ENCODE measurements at regions of chr5 and their contacts with region 1.

Region 1: GRCh38 chr5:172932313-172933017 is 26.8 kb upstream of the RPL26L1 start:
- DNase-seq: peak; percentile 64 to 74 (median 70)
- H3K4me3 ChIP-seq: no peak overlapping the region
- H3K4me3 Mint-ChIP-seq: no peak overlapping the region
- H3K27ac ChIP-seq: no peak overlapping the region
- H3K27ac Mint-ChIP-seq: peak overlapping the region in 5 of 7 donors; percentile 54 to 80 (median 66)
- H3K4me1 ChIP-seq: peaks cover 4% of the 10 kb centered on the region
- H3K4me1 Mint-ChIP-seq: peaks cover 6 to 8% (median 6%) of the 10 kb centered on the region in 4 donors
- H3K27me3 ChIP-seq: no peaks in the 10 kb centered on the region
- H3K27me3 Mint-ChIP-seq: no peaks in the 10 kb centered on the region

Region 2: DNA sequence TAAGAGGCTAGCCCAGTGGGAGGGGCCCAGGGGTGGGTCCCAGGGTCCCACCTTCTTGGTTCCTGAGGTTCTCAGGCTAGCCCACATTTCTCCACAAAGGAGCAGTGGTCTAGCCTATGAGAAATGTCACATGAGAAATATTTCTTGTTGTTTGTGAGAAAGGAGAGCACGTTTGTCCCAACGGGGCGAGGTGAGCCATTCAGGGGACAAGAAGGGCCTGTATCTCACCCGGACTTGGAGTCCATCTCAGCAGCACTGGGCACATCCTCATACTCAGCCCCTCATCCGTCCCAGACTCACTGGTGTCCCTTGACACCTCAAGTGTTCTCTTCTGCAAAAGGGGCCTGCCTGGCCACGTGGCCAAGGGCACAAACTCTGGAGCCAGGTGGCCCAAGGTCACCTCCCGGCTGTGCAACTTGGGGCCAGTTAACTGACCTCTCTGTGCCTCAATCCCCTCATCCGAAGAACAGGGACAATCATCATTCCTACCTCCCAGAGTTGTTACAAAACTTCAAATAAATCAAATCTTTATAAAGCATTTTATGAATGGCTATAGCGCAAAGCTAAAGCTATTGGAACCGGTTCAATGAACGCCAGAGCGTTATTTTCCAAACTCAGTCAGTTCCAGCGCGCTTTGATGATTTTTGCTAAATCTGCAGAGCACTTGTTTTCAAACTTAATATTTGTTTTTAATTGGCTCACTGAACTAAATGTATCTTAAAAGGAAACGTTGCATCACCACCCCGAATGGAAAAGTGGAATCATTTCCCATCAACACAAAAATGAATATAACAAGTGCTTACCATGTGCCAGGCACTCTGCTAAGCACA is 210.9 kb before region 1 on chr5:
- CTCF ChIA-PET with region 1: interaction called, 55 read pairs
- POLR2A ChIA-PET with region 1: interaction called, 15 read pairs
- intact Hi-C with region 1: no loop called
- DNase-seq: no peak
- H3K4me3 ChIP-seq: no peak overlapping the region
- H3K4me3 Mint-ChIP-seq: peak overlapping the region in 4 of 8 donors; percentile 35 to 69 (median 54)
- H3K27ac ChIP-seq: no peak overlapping the region
- H3K27ac Mint-ChIP-seq: peak overlapping the region in 5 of 7 donors; percentile 5 to 95 (median 62)
- H3K4me1 ChIP-seq: peaks cover 24% of the 10 kb centered on the region
- H3K4me1 Mint-ChIP-seq: peaks cover 15 to 34% (median 22%) of the 10 kb centered on the region in 4 donors
- H3K27me3 ChIP-seq: no peaks in the 10 kb centered on the region
- H3K27me3 Mint-ChIP-seq: no peaks in the 10 kb centered on the region

Region 3: DNA sequence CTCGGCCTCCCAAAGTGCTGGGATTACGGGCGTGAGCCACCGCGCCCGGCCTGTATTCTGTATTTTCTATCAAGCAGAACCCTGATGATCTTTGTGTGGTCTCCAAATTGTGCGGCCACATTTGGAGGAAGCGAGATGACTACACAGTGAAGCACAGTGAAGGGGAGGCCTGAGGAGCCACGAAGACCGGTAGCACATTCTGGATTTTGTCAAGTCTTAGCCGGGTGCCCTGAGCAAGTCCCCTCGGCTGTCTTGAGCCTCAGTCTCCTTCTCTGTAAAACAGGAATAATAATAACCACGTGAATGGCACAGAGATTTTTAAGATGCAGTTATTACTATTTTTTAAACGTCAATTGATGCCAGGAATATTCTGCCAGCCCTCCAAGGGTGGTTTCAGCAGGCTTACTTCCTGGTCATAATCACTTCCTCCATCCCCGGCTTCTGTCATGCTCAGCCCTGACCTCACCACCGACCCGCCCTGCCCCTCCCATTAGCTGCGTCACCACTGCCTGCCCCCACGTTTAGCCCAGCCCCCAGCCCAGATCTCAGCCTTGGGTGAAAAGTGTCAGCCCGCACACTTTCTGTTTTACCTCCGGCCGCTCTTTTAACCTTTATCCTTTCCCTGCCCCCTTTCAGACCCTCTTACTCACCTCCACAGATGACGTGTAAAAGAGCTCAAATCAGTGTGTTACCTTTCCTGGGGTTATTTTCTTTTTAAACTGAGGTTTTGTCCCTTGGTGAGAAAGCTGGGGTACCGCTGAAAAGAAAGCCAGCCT is 125.4 kb before region 1 on chr5:
- CTCF ChIA-PET with region 1: interaction called, 11 read pairs
- POLR2A ChIA-PET with region 1: no interaction called
- intact Hi-C with region 1: no loop called
- DNase-seq: peak; percentile 72 to 88 (median 78)
- H3K4me3 ChIP-seq: peak overlapping the region in 1 of 2 donors; percentile 21
- H3K4me3 Mint-ChIP-seq: peak overlapping the region; percentile 75 to 91 (median 82)
- H3K27ac ChIP-seq: peak overlapping the region; percentile 52
- H3K27ac Mint-ChIP-seq: peak overlapping the region; percentile 79 to 98 (median 95)
- H3K4me1 ChIP-seq: peaks cover 11% of the 10 kb centered on the region
- H3K4me1 Mint-ChIP-seq: peaks cover 9 to 16% (median 14%) of the 10 kb centered on the region in 4 donors
- H3K27me3 ChIP-seq: no peaks in the 10 kb centered on the region
- H3K27me3 Mint-ChIP-seq: peaks cover 0 to 1% of the 10 kb centered on the region in 2 donors

Region 4: GRCh38 chr5:172860520-172861443 is 71.7 kb before region 1 on chr5:
- CTCF ChIA-PET with region 1: interaction called, 13 read pairs
- POLR2A ChIA-PET with region 1: no interaction called
- intact Hi-C with region 1: no loop called
- DNase-seq: no peak
- H3K4me3 ChIP-seq: no peak overlapping the region
- H3K4me3 Mint-ChIP-seq: no peak overlapping the region
- H3K27ac ChIP-seq: no peak overlapping the region
- H3K27ac Mint-ChIP-seq: peak overlapping the region in 3 of 7 donors; percentile 71 to 74 (median 72)
- H3K4me1 ChIP-seq: peaks cover 19% of the 10 kb centered on the region
- H3K4me1 Mint-ChIP-seq: peaks cover 22 to 48% (median 36%) of the 10 kb centered on the region in 4 donors
- H3K27me3 ChIP-seq: no peaks in the 10 kb centered on the region
- H3K27me3 Mint-ChIP-seq: no peaks in the 10 kb centered on the region

Region 5: DNA sequence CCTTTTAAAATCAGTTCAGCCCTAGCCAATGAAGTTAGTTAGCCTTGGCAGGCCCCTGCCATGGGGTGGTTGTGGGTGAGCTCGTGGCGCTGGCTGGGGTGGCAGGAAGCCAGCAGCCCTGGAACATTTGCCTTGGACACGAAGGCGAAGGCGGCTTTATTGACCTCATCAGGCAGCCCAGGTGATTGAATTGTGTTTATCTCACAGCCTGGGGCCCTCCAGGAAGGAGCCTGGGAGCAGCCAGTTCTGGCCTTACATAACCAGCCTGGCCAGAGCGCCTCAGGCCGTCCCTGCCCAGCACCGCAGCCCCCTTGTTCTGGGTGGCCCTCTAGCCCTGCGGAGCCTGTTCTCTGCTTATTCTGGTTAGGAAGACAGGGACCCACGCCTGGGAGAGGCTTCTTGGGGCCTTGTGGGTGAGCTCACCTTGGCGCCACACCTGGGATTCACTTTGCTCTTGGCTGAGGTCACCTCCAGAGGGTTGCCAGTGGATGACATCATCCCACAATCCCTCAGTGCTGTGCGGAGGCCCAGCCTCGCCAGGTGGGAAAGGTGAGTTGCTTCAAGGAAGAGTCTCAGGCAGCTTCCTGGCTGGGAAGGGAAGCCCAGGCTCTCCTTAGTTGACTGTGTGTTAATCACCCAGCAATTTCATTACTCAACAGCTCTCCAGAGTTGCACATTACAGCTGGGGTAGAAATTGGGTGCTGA is 27.7 kb before region 1 on chr5:
- CTCF ChIA-PET with region 1: interaction called, 11 read pairs
- POLR2A ChIA-PET with region 1: no interaction called
- intact Hi-C with region 1: no loop called
- DNase-seq: no peak
- H3K4me3 ChIP-seq: no peak overlapping the region
- H3K4me3 Mint-ChIP-seq: no peak overlapping the region
- H3K27ac ChIP-seq: no peak overlapping the region
- H3K27ac Mint-ChIP-seq: peak overlapping the region in 1 of 7 donors; percentile 52
- H3K4me1 ChIP-seq: no peaks in the 10 kb centered on the region
- H3K4me1 Mint-ChIP-seq: peaks cover 0 to under 1% (median 0%) of the 10 kb centered on the region in 4 donors
- H3K27me3 ChIP-seq: no peaks in the 10 kb centered on the region
- H3K27me3 Mint-ChIP-seq: no peaks in the 10 kb centered on the region

Region 6: DNA sequence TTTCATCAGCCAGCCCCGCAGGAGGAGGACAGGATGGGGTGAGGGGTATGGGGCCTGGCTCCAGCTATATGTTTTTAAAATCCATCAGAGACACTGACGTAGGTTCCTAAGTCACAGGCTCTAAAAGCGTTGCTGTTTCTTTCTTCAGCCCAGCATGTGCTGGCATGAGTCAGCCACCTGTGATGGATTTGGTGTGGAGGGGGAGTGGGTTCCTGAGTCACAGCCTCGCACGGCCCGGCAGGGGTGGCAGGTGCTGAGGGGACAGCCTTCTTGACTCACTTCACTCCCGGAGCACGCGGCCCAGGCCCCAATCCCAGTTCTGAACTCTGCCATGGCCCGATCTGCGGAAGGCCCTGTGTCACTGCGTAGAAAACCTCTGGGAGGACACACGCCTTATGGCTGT is 12.0 kb before region 1 on chr5:
- CTCF ChIA-PET with region 1: interaction called, 10 read pairs
- POLR2A ChIA-PET with region 1: no interaction called
- intact Hi-C with region 1: no loop called
- DNase-seq: no peak
- H3K4me3 ChIP-seq: no peak overlapping the region
- H3K4me3 Mint-ChIP-seq: no peak overlapping the region
- H3K27ac ChIP-seq: no peak overlapping the region
- H3K27ac Mint-ChIP-seq: peak overlapping the region in 1 of 7 donors; percentile 30
- H3K4me1 ChIP-seq: no peaks in the 10 kb centered on the region
- H3K4me1 Mint-ChIP-seq: peaks cover 0 to 4% (median under 1%) of the 10 kb centered on the region in 4 donors
- H3K27me3 ChIP-seq: no peaks in the 10 kb centered on the region
- H3K27me3 Mint-ChIP-seq: no peaks in the 10 kb centered on the region

Region 7: DNA sequence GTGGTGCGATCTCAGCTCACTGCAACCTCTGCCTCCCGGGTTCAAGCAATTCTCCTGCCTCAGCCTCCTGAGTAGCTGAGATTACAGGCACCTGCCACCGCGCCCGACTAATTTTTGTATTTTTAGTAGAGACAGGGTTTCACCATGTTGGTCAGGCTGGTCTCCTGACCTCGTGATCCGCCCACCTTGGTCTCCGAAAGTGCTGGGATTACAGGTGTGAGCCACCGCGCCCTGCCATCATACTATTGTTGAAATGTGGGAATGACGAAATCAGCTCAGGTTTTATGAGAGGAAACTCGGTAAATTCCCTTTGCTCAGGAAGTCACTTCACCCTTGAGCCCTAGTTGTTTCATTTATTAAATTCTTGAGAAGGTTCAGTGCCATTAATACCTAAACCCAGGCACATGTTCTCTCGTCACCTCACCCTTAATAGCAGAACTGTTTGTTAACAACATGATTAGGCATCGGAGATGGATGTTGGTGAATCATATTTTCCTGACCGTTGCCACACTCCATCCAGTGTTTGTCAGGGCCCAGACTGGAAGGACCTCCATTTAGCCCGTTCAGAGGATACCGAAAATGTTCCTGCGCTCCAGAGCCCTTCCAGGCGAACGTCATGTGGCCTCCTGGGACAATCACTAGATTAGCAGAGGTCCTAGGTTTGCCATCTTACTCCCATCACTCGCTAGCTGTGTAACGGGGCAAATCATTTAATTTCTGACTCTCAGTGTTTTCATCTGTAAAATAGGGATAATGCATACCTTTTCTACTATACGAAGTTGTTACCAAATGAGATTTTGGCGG is 103.6 kb after region 1 on chr5:
- CTCF ChIA-PET with region 1: no interaction called
- POLR2A ChIA-PET with region 1: no interaction called
- intact Hi-C with region 1: no loop called
- DNase-seq: peak in 1 of 5 donors; percentile 40
- H3K4me3 ChIP-seq: peak overlapping the region; percentile 44 to 47
- H3K4me3 Mint-ChIP-seq: peak overlapping the region; percentile 80 to 95 (median 86)
- H3K27ac ChIP-seq: peak overlapping the region; percentile 71
- H3K27ac Mint-ChIP-seq: peak overlapping the region; percentile 90 to 97 (median 95)
- H3K4me1 ChIP-seq: peaks cover 46% of the 10 kb centered on the region
- H3K4me1 Mint-ChIP-seq: peaks cover 39 to 64% (median 54%) of the 10 kb centered on the region in 4 donors
- H3K27me3 ChIP-seq: no peaks in the 10 kb centered on the region
- H3K27me3 Mint-ChIP-seq: no peaks in the 10 kb centered on the region

Measured in CD4-positive, alpha-beta memory T cell (primary cell).